PC-3 (cell line): ENCODE measurements at regions of chr15 and their contacts with region 1.

Region 1: DNA sequence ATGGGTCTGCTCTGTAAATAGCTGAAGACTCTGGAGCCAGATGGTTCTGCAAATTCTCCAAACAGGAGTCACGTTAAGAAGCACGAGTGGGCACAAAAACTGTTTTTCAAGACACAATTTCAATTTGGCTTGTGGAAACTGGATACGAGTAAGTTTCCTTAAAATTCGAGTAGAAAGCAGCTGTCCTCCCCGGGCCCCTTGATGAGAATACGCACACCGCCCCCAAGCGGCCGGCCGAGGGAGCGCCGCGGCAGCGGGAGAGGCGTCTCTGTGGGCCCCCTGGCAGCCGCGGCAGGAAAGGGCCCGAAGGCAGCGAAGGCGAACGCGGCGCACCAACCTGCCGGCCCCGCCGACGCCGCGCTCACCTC is 778 bp upstream of the THBS1 start:
- DNase-seq: peak; percentile 96
- ATAC-seq: peak; percentile 59
- H3K4me3 ChIP-seq: peak overlapping the region; percentile 87
- H3K27ac ChIP-seq: peak overlapping the region; percentile 93
- H3K4me1 ChIP-seq: peaks cover 45% of the 10 kb centered on the region
- H3K27me3 ChIP-seq: no peaks in the 10 kb centered on the region
- CTCF ChIP-seq: peak; percentile 95

Region 2: GRCh38 chr15:39125904-39126303 is 454.2 kb before region 1 on chr15:
- CTCF ChIA-PET with region 1: no interaction called
- POLR2A ChIA-PET with region 1: interaction called, 8 read pairs
- intact Hi-C with region 1: loop called (anchors 1 kb)
- DNase-seq: peak; percentile 78
- ATAC-seq: no peak
- H3K4me3 ChIP-seq: no peak overlapping the region
- H3K27ac ChIP-seq: peak overlapping the region; percentile 88
- H3K4me1 ChIP-seq: peaks cover 70% of the 10 kb centered on the region
- H3K27me3 ChIP-seq: no peaks in the 10 kb centered on the region
- CTCF ChIP-seq: peak; percentile 76

Region 3: GRCh38 chr15:39315206-39315850 is 264.8 kb before region 1 on chr15:
- CTCF ChIA-PET with region 1: interaction called, 3 read pairs
- POLR2A ChIA-PET with region 1: no interaction called
- intact Hi-C with region 1: loop called (anchors 2 kb)
- DNase-seq: peak; percentile 48
- ATAC-seq: no peak
- H3K4me3 ChIP-seq: no peak overlapping the region
- H3K27ac ChIP-seq: no peak overlapping the region
- H3K4me1 ChIP-seq: peaks cover 10% of the 10 kb centered on the region; the same call in 1 of the 2 replicates
- H3K27me3 ChIP-seq: no peaks in the 10 kb centered on the region
- CTCF ChIP-seq: no peak

Region 4: DNA sequence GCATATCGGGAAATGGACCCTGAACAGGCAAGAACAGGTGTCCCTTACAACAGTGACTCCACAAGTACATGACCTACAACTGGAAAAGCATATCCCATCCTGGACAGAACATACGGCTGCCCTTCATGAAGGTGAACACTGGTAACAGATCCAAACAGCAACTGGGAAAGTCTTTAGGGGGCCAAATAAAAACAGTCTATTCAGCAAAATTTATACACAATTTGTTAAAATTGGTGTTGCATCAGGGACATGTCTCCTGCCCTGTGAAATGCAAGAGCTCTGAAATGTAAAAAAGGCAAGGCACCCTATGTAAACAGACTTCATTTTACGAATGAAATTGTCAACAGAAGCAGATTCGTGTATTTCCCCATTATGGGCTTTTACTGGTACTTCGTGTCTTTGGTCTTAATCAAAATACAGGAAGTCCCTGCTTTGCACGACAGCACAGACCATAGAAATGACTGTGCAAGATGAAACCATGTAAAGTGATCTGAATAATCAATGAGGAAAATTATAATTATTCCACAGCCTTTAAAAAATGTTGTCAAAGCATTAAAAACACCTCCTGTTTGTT is 126.5 kb before region 1 on chr15:
- CTCF ChIA-PET with region 1: no interaction called
- POLR2A ChIA-PET with region 1: interaction called, 7 read pairs
- intact Hi-C with region 1: loop called (anchors 1 kb)
- DNase-seq: no peak
- ATAC-seq: no peak
- H3K4me3 ChIP-seq: no peak overlapping the region
- H3K27ac ChIP-seq: no peak overlapping the region
- H3K4me1 ChIP-seq: peaks cover 21% of the 10 kb centered on the region
- H3K27me3 ChIP-seq: no peaks in the 10 kb centered on the region
- CTCF ChIP-seq: no peak

Region 5: GRCh38 chr15:39686000-39686613 is 106.0 kb after region 1 on chr15:
- CTCF ChIA-PET with region 1: interaction called, 3 read pairs
- POLR2A ChIA-PET with region 1: interaction called, 7 read pairs
- intact Hi-C with region 1: loop called (anchors 5 kb)
- DNase-seq: peak; percentile 70
- ATAC-seq: peak; percentile 80
- H3K4me3 ChIP-seq: no peak overlapping the region
- H3K27ac ChIP-seq: no peak overlapping the region
- H3K4me1 ChIP-seq: no peaks in the 10 kb centered on the region
- H3K27me3 ChIP-seq: no peaks in the 10 kb centered on the region
- CTCF ChIP-seq: peak; percentile 92